T-cell (primary cell): ENCODE measurements at regions of chr10 and their contacts with region 1.

Region 1: DNA sequence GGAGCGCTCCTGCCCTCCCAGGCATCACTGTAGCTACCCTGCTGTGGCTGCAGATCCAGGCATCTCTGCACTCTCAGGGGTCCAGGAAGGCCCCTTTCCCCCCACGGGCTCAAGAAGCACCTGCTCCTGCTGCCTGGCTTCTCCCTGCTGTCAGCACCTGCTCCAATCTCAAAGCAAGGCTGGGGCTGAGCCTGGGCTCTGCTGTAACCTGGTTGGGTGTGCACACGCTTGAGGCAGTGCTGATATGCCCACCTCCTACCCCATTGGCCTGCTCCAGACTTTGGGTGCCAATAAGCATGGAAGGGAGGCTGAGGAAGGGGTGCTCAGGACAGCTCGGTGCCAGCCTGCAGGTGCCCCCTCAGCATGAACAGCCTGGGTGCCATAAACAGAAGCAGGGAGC is 185.0 kb downstream of the ZNF438 start:
- DNase-seq: no peak
- ATAC-seq: no peak
- H3K4me3 ChIP-seq: no peak overlapping the region
- H3K4me3 Mint-ChIP-seq: no peak overlapping the region
- H3K27ac ChIP-seq: no peak overlapping the region
- H3K27ac Mint-ChIP-seq: no peak overlapping the region
- H3K4me1 ChIP-seq: peaks cover 0 to 7% of the 10 kb centered on the region in 2 experiments
- H3K4me1 Mint-ChIP-seq: peaks cover 2 to 13% (median 7%) of the 10 kb centered on the region in 3 donors
- H3K27me3 ChIP-seq: no peaks in the 10 kb centered on the region
- H3K27me3 Mint-ChIP-seq: no peaks in the 10 kb centered on the region

Region 2: DNA sequence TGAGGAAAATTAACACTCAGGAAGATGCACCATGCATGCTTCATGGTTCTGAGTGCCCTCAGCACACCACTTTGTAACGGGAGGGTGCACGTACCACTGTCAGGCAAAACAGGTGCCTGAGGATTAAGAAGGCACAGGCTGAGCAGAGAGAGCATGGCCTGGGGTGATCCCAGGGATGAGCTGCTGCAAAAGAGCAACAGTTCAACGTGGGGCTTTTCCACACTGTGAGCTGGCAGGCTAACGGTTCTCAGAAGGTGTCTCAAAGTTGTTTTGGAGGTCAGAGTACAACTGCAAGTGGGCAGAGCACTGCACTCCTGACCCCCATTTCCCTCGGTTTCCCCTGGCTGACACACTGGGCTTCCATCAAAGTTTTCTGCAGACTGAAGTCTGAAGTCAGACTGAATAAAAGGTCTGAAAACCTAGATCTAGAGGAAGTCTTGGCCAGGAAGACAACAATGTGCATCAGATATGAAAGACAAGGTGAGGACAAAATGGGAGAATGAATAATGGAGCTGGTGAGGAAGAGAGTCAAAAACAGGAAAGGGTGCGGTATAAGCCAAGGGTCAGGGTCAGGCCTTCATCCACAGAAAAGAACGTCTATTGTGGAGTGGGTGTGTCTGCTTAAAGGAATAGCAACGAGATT is 164.4 kb after region 1 on chr10:
- CTCF ChIA-PET with region 1: no interaction called
- POLR2A ChIA-PET with region 1: no interaction called
- DNase-seq: no peak
- ATAC-seq: no peak
- H3K4me3 ChIP-seq: no peak overlapping the region
- H3K4me3 Mint-ChIP-seq: no peak overlapping the region
- H3K27ac ChIP-seq: no peak overlapping the region
- H3K27ac Mint-ChIP-seq: no peak overlapping the region
- H3K4me1 ChIP-seq: no peaks in the 10 kb centered on the region
- H3K4me1 Mint-ChIP-seq: peaks cover under 1 to 15% (median 4%) of the 10 kb centered on the region in 3 donors
- H3K27me3 ChIP-seq: no peaks in the 10 kb centered on the region
- H3K27me3 Mint-ChIP-seq: no peaks in the 10 kb centered on the region

Region 3: GRCh38 chr10:31204090-31204489 is 357.4 kb after region 1 on chr10:
- CTCF ChIA-PET with region 1: no interaction called
- POLR2A ChIA-PET with region 1: no interaction called
- DNase-seq: no peak
- ATAC-seq: no peak
- H3K4me3 ChIP-seq: no peak overlapping the region
- H3K4me3 Mint-ChIP-seq: no peak overlapping the region
- H3K27ac ChIP-seq: no peak overlapping the region
- H3K27ac Mint-ChIP-seq: no peak overlapping the region
- H3K4me1 ChIP-seq: no peaks in the 10 kb centered on the region
- H3K4me1 Mint-ChIP-seq: no peaks in the 10 kb centered on the region
- H3K27me3 ChIP-seq: no peaks in the 10 kb centered on the region
- H3K27me3 Mint-ChIP-seq: no peaks in the 10 kb centered on the region

Region 4: GRCh38 chr10:31847515-31847914 is 1000.8 kb after region 1 on chr10:
- CTCF ChIA-PET with region 1: no interaction called
- POLR2A ChIA-PET with region 1: interaction called in 1 of 2 experiments, 15 read pairs
- DNase-seq: no peak
- ATAC-seq: no peak
- H3K4me3 ChIP-seq: no peak overlapping the region
- H3K4me3 Mint-ChIP-seq: no peak overlapping the region
- H3K27ac ChIP-seq: no peak overlapping the region
- H3K27ac Mint-ChIP-seq: no peak overlapping the region
- H3K4me1 ChIP-seq: no peaks in the 10 kb centered on the region
- H3K4me1 Mint-ChIP-seq: peaks cover 22 to 25% (median 24%) of the 10 kb centered on the region in 3 donors
- H3K27me3 ChIP-seq: no peaks in the 10 kb centered on the region
- H3K27me3 Mint-ChIP-seq: no peaks in the 10 kb centered on the region